GM12878 (cell line): ENCODE measurements at regions of chr5 and their contacts with region 1.

Region 1: DNA sequence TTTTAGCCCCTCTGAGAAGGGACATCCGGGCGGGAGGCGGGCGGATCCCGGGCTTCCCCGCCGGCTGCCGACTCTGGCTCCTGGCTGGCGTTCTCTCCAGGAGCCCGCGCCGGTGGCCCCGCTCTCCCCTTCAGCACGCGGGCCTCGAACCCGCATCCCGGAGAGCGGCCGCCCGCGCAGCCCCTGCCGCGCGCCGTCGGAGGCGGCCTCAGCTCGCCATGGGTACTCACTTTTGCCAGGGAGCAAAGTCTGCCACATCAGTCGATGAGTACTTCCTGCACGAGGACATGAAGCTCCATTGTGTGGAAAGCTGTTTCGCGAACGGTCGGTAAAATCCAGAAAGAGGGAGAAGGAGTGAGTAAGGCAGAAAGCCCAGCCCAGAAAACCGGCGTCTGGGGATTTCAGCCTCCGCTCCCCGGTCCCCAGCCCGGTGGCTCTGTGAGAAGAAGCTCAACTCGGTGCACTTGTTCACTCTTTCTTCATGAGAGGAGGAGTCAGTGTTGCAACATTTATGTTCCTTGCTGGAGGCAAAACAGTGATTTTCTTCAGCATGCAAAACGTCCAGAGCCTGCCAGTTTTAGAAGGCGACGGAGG is at the start of gene PRLR:
- DNase-seq: no peak
- ATAC-seq: peak; percentile 38
- H3K4me3 ChIP-seq: peak within 1 kb of the TSS; percentile 64
- H3K27ac ChIP-seq: peak within 1 kb of the TSS; percentile 25; the same call in 1 of the 2 replicates
- H3K4me1 ChIP-seq: no peaks in the 10 kb centered on the region
- H3K27me3 ChIP-seq: peaks cover 0 to 8% of the 10 kb centered on the region in 2 experiments; a peak in 2 of 4 replicates
- CTCF ChIP-seq: no peak
- EP300 ChIP-seq: no peak
- POLR2A ChIP-seq: no peak
- RAD21 ChIP-seq: no peak
- polyA plus RNA-seq, gene PRLR: 0.04 to 0.85 TPM

Region 2: DNA sequence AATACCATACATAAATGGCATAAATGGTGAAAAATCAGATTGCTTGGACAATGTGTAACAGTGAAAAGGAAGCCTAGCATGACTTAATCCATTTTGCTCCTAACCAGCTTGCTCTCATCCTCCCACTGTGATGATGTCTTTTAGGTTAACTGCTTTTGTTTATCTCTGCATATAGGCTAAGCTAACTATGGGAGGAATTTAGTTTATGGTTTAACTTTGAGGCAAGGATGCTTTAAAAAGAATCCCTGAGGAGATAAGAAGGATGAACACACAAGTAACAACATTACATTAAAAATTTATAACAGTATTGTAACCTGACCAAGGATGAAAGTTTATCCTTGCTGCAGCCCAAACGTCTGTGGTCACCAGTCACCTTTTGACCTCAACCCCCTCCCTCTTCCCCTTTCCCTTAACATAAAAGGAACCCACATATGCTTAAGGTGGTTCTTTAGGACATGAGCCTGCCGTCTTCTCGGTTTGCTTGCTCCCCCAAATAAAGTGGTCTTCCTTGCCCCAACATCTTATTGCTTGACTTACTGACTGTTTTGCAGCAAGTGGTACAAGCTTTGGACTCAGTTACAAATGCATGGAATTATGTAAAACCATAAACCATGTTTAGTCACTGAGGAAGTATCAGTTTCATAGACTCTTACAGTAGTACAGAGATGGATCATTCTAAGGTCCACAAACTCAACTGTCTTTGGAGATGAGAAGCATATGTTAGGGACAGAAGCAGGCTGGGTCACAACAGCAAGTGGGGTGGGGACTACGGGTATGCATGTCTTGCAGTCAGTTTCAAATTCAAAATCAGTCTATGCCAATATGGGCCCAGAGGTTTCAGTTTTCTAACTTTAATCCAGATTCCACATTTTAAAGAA is 213.7 kb before region 1 on chr5:
- CTCF ChIA-PET with region 1: no interaction called
- POLR2A ChIA-PET with region 1: no interaction called
- RAD21 ChIA-PET with region 1: no interaction called
- SMC1A ChIA-PET with region 1: no interaction called
- in situ Hi-C with region 1: no loop called
- intact Hi-C with region 1: no loop called
- DNase-seq: no peak
- ATAC-seq: peak; percentile 65
- H3K4me3 ChIP-seq: no peak overlapping the region
- H3K27ac ChIP-seq: no peak overlapping the region
- H3K4me1 ChIP-seq: no peaks in the 10 kb centered on the region
- H3K27me3 ChIP-seq: no peaks in the 10 kb centered on the region
- CTCF ChIP-seq: no peak
- EP300 ChIP-seq: no peak
- POLR2A ChIP-seq: no peak
- RAD21 ChIP-seq: no peak

Region 3: DNA sequence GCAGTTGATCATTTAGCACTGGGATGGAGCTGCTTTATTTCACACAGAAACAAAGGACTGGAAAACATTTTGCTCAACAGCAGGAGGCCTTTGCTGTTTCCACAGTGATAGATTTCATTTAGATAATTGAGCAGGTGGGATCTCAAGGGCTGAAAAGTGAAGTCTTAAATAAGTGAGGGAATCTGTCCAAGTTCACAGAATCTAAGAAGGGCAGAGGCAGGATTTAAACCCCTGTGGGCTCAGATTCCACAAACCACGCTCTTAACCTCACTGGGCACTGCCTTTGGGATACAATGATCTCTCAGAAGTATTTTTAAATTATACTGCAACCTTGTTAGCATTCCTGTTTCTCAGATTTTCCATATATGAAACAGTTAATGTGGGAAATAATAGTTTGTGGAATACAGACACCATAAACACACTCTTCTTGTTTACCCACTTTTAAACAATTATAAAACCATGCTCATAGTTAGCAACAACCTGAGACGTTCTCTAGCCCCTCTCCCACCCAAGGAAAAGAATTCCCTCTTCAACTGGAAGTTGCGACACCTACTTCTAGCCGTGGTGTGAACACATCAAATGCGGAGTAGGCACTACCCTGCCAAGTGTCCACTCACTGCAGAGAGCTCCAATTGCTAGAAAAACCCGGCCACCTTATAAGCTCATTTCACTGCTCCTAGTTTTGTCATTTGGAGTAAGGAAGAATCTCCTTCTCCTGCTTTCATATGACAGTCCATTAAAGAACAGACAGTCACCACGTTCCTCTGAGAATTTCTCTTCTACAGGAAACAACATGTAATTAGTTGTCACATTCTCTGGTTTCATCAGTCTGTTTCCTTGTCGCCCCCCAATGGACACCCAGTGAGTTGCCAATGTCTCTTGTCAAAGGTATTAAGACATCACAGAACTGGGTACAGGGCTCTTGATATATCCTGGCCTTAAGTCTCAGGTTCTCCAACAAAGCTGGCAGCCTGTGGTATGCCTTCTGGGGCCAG is 47.3 kb before region 1 on chr5:
- CTCF ChIA-PET with region 1: interaction called, 14 read pairs
- POLR2A ChIA-PET with region 1: interaction called, 3 read pairs
- RAD21 ChIA-PET with region 1: interaction called, 8 read pairs
- SMC1A ChIA-PET with region 1: interaction called, 7 read pairs
- in situ Hi-C with region 1: no loop called
- intact Hi-C with region 1: no loop called
- DNase-seq: peak; percentile 27
- ATAC-seq: peak; percentile 91
- H3K4me3 ChIP-seq: no peak overlapping the region
- H3K27ac ChIP-seq: no peak overlapping the region
- H3K4me1 ChIP-seq: no peaks in the 10 kb centered on the region
- H3K27me3 ChIP-seq: no peaks in the 10 kb centered on the region
- CTCF ChIP-seq: peak; percentile 59 to 69 (median 63)
- EP300 ChIP-seq: no peak
- POLR2A ChIP-seq: no peak
- RAD21 ChIP-seq: peak; percentile 62

Region 4: DNA sequence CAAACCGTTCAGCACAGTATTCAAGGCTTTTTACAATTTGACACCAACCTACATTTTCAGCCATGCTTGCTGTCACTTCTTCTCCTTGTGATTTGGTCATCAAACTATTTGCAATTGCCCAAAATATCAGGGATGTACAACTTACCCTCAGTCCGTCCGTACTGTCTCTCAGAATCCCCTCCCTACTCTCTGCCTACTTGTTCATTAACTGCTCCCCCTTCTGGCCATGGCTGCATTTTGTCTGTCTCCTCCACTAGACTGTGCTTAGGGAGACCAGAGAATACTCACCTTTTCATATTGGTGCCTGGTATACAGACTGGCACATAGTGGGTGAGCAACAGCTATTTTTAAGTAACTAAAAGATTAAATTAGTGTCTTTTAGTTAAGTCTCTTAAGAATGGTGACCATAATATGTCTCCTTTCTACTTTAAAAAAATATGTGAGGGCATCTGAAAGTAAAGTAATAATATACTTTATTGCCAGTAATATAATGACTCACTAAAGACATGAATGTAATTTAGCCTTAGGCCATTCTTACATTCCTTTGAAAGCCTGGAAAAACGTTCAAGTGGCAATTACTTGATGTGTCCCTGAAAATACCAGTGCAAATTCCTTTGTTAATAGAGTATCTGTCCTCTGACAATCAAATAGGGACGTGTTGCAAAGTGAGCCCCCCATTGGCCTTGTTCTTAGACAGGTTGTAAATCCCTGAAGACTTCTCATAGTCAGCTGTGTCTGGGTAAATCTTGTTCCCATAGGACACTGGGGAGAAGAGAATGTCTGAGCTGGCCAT is 27.6 kb before region 1 on chr5:
- CTCF ChIA-PET with region 1: interaction called, 14 read pairs
- POLR2A ChIA-PET with region 1: interaction called, 3 read pairs
- RAD21 ChIA-PET with region 1: interaction called, 12 read pairs
- SMC1A ChIA-PET with region 1: interaction called, 224 read pairs
- in situ Hi-C with region 1: no loop called
- intact Hi-C with region 1: no loop called
- DNase-seq: no peak
- ATAC-seq: peak; percentile 88
- H3K4me3 ChIP-seq: no peak overlapping the region
- H3K27ac ChIP-seq: no peak overlapping the region
- H3K4me1 ChIP-seq: no peaks in the 10 kb centered on the region
- H3K27me3 ChIP-seq: no peaks in the 10 kb centered on the region
- CTCF ChIP-seq: peak; percentile 35 to 48 (median 45); a peak in 5 of 6 replicates
- EP300 ChIP-seq: no peak
- POLR2A ChIP-seq: no peak
- RAD21 ChIP-seq: peak; percentile 44

Region 5: DNA sequence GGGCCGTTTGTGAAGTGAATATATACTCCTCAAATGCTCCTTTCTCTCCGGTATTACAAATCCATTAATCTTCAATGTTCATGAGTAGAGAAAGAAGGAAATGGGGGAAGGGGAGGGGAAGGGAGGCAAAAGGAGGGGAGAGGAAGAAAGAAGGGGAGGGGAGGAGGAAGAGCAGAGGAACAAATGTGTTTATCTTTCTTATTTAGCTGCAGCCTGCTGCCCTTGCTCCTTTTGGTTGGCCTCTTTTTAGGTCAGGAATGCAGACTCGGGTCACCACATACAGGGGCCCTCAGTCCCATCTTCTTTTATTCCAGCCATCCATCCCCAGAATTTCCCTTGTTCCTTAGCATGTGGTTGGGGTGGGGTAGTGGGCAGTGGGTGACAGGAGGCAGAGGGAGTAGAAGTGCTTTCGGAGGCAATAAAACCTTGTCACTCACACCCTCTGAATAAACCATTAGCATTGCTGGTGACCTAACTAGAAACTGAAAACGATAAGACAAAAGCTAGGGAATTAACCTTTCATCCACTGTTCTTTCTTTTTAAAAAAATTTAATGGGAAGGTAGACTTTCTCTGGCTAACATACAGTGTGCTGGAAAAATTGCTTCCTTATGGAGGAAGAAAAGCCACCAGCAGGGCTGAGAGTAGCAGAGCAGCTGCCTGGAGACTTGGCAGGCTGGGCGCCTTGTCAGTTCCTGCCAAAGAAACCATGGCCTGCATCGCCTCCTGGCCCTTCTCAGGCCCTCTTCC is 16.9 kb after region 1 on chr5:
- CTCF ChIA-PET with region 1: interaction called, 56 read pairs
- POLR2A ChIA-PET with region 1: interaction called, 46 read pairs
- RAD21 ChIA-PET with region 1: interaction called, 79 read pairs
- SMC1A ChIA-PET with region 1: interaction called, 95 read pairs
- in situ Hi-C with region 1: no loop called
- intact Hi-C with region 1: loop called (anchors 1 kb)
- DNase-seq: no peak
- ATAC-seq: peak; percentile 75
- H3K4me3 ChIP-seq: no peak overlapping the region
- H3K27ac ChIP-seq: no peak overlapping the region; the same call in 1 of the 2 replicates
- H3K4me1 ChIP-seq: no peaks in the 10 kb centered on the region
- H3K27me3 ChIP-seq: no peaks in the 10 kb centered on the region
- CTCF ChIP-seq: no peak
- EP300 ChIP-seq: peak in 1 of 2 experiments; percentile 13; a peak in 1 of 4 replicates
- POLR2A ChIP-seq: no peak
- RAD21 ChIP-seq: no peak

Region 6: GRCh38 chr5:35308421-35308820 is 78.3 kb after region 1 on chr5:
- CTCF ChIA-PET with region 1: no interaction called
- POLR2A ChIA-PET with region 1: interaction called, 3 read pairs
- RAD21 ChIA-PET with region 1: interaction called, 7 read pairs
- SMC1A ChIA-PET with region 1: interaction called, 11 read pairs
- in situ Hi-C with region 1: no loop called
- intact Hi-C with region 1: loop called (anchors 5 kb)
- DNase-seq: no peak
- ATAC-seq: peak; percentile 94
- H3K4me3 ChIP-seq: no peak overlapping the region
- H3K27ac ChIP-seq: no peak overlapping the region
- H3K4me1 ChIP-seq: no peaks in the 10 kb centered on the region
- H3K27me3 ChIP-seq: no peaks in the 10 kb centered on the region
- CTCF ChIP-seq: no peak
- EP300 ChIP-seq: no peak
- POLR2A ChIP-seq: no peak
- RAD21 ChIP-seq: no peak

Region 7: DNA sequence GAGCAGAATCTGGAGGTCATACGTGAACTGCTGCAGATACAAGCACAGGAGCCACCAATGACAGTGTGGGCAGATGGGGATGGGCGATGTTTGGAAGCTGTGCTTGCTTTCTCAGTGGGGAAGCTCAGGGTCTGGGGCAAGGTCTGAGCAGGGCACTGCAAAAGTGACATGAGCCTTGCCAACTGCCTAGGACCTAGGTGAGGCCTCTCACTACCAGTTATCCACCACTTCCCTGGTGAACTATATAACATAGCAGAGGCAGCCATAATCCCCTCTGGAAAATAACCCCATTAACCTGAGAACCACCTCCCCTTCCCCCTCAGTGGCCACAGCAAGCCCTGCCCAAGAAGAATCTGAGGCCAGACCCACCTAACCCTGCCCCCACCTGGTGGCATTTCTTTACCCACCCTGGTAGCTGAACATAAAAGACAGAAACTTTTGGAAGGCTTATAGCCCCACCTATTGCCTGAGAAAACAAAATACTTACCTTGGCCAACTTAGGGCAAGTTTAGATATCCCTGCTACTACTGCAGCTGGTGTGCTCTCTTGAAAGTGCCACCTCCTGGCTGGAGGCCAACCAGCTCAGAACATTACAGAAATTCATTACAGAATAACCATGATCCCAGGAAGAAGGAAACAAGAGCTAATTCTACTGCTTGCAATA is 368.7 kb after region 1 on chr5:
- CTCF ChIA-PET with region 1: interaction called, 17 read pairs
- POLR2A ChIA-PET with region 1: no interaction called
- RAD21 ChIA-PET with region 1: interaction called, 6 read pairs
- SMC1A ChIA-PET with region 1: interaction called, 17 read pairs
- in situ Hi-C with region 1: no loop called
- intact Hi-C with region 1: loop called (anchors 2 kb)
- DNase-seq: no peak
- ATAC-seq: peak; percentile 87
- H3K4me3 ChIP-seq: no peak overlapping the region
- H3K27ac ChIP-seq: no peak overlapping the region
- H3K4me1 ChIP-seq: no peaks in the 10 kb centered on the region
- H3K27me3 ChIP-seq: no peaks in the 10 kb centered on the region
- CTCF ChIP-seq: peak in 2 of 3 experiments; percentile 21 to 41; a peak in 2 of 6 replicates
- EP300 ChIP-seq: no peak
- POLR2A ChIP-seq: no peak
- RAD21 ChIP-seq: peak; percentile 29; the same call in 1 of the 2 replicates